Calu3 (cell line): ENCODE measurements at regions of chr18 and their contacts with region 1.

Region 1: DNA sequence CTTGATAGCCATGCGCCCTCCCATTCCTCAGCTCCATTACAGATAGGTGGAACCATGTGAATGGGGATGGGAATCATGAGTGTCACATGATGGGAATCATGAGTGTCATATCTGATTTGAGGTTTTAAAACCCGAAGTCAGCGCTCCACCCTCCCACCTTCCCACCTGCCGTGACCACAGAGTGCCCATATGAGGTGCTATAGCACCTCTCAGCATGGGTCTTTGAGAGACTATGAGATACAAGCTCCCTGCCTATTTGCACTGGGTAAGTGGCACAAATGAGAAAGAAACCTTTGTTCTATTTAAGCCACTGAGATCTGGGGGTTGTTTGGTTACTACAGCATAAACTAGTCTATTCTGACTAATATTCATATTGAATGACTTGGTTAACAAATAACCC is 78.5 kb upstream of the PTPRM start:
- DNase-seq: peak; percentile 62
- H3K4me3 Mint-ChIP-seq: peak overlapping the region; percentile 27
- H3K27ac Mint-ChIP-seq: peak overlapping the region; percentile 66
- H3K4me1 Mint-ChIP-seq: peaks cover 41% of the 10 kb centered on the region
- H3K27me3 Mint-ChIP-seq: no peaks in the 10 kb centered on the region
- CTCF ChIP-seq: peak; percentile 27

Region 2: DNA sequence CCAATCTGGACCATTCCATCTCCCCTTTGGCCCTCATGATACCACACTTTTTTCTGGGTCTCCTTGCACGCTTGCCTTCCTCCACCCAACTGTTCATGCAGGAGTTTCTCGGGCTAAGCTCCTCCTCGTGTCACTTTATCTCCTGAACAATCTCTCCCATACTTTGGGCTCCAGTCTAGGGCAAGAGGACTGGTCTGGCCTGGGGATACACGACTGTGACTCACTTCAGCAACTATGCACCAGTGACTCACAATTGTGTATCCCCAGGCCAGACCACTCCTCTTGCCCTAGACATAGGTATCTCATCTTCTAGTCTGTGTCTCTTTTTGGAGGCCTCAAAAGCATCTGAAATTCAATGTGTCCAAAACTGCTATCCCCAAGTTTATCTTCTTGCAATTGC is 70.8 kb before region 1 on chr18:
- CTCF ChIA-PET with region 1: no interaction called
- intact Hi-C with region 1: no loop called
- DNase-seq: peak; percentile 11
- H3K4me3 Mint-ChIP-seq: no peak overlapping the region
- H3K27ac Mint-ChIP-seq: no peak overlapping the region
- H3K4me1 Mint-ChIP-seq: peaks cover 18% of the 10 kb centered on the region
- H3K27me3 Mint-ChIP-seq: no peaks in the 10 kb centered on the region
- CTCF ChIP-seq: no peak

Region 3: GRCh38 chr18:7512348-7512747 is 23.8 kb after region 1 on chr18:
- CTCF ChIA-PET with region 1: interaction called, 5 read pairs
- intact Hi-C with region 1: loop called (anchors 2 kb)
- DNase-seq: peak; percentile 65
- H3K4me3 Mint-ChIP-seq: peak overlapping the region; percentile 36
- H3K27ac Mint-ChIP-seq: peak overlapping the region; percentile 17
- H3K4me1 Mint-ChIP-seq: peaks cover 19% of the 10 kb centered on the region
- H3K27me3 Mint-ChIP-seq: no peaks in the 10 kb centered on the region
- CTCF ChIP-seq: no peak

Region 4: DNA sequence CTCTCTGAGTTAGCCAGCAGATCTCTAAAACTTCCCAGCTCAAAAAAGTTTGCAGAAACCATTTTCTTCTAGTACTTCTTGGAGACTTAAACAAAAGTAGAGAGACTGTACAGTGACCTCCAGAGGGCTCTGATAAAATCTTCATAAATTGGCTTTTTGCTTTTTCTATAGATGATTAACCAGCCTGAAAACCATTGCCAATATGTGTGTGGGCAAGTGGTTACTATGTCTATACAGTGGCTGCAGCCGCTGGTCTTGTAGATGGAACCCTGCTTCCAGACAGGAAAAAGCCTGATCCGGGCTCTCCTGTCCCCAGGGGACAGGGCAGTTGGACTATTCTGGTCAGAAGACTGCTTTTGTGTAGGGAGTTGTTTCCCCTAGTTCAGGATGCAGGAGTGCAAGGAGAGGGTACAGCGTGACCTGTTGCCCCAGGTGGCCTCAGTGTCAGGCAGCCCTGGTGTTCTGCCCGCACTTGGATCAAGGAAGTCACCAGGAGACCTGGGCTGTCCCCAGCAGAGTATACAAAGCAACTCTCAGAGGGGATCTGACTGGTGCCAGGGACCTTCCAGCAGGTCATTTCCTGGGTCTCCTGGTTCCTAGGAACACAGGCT is 71.2 kb after region 1 on chr18:
- CTCF ChIA-PET with region 1: interaction called, 3 read pairs
- intact Hi-C with region 1: loop called (anchors 2 kb)
- DNase-seq: peak; percentile 13
- H3K4me3 Mint-ChIP-seq: no peak overlapping the region
- H3K27ac Mint-ChIP-seq: no peak overlapping the region
- H3K4me1 Mint-ChIP-seq: peaks cover 22% of the 10 kb centered on the region
- H3K27me3 Mint-ChIP-seq: no peaks in the 10 kb centered on the region
- CTCF ChIP-seq: no peak

Region 5: GRCh38 chr18:7566567-7567473 is 78.2 kb after region 1 on chr18 and contains the start of gene PTPRM:
- CTCF ChIA-PET with region 1: interaction called, 31 read pairs
- intact Hi-C with region 1: loop called (anchors 2 kb)
- DNase-seq: peak; percentile 86
- H3K4me3 Mint-ChIP-seq: peak within 1 kb of the TSS; percentile 78
- H3K27ac Mint-ChIP-seq: no peak within 1 kb of the TSS
- H3K4me1 Mint-ChIP-seq: peaks cover 36% of the 10 kb centered on the region
- H3K27me3 Mint-ChIP-seq: no peaks in the 10 kb centered on the region
- CTCF ChIP-seq: no peak
- total RNA-seq, gene PTPRM: 42.3 and 48.5 TPM in 2 replicates

Region 6: DNA sequence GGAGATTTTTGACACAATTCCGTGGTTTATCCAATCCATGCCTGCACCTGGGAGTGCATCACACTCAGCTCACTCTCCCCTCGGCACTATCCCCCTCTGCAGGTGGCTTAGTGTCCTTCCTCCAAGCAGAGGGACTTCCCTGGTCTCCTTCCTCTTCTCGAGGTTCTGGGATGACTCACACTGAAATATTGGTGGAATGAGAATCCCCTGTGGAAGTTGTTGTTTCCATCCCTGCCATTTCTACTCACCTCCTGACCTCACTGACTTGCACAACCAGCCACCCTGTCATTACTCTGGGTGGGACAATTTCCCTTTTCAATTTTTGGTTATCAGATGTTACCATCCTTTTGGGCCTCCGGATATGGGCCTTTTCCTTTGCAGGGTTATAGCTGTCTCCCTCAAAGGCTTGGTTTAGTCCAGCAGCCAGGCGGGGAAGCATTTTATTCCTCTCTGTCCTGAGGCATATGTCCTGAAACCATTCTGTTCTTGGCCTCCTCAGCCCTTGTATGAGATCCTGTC is 138.4 kb after region 1 on chr18:
- CTCF ChIA-PET with region 1: interaction called, 4 read pairs
- intact Hi-C with region 1: loop called (anchors 5 kb)
- DNase-seq: peak; percentile 72
- H3K4me3 Mint-ChIP-seq: peak overlapping the region; percentile 15
- H3K27ac Mint-ChIP-seq: peak overlapping the region; percentile 16
- H3K4me1 Mint-ChIP-seq: peaks cover 19% of the 10 kb centered on the region
- H3K27me3 Mint-ChIP-seq: no peaks in the 10 kb centered on the region
- CTCF ChIP-seq: peak; percentile 30

Region 7: DNA sequence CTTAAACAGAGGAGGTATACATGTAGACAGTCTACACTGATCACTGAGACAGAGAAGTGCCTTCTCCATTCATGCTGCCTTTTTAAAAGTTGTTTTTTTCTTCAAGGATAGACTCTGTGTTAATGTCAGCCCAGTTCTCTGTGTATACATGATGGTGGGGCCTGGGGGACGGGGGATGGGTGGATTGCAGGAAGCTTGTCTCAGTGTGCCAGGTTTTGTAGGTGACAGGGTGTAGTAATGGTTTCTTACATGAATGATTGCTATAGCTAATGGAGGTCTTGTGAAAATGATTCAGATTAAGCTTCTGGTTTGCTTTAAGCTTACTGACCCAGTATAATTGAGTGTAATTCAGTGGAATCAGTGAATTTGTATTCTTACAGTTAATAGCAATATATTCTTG is 502.1 kb after region 1 on chr18:
- CTCF ChIA-PET with region 1: no interaction called
- intact Hi-C with region 1: no loop called
- DNase-seq: no peak
- H3K4me3 Mint-ChIP-seq: no peak overlapping the region
- H3K27ac Mint-ChIP-seq: no peak overlapping the region
- H3K4me1 Mint-ChIP-seq: no peaks in the 10 kb centered on the region
- H3K27me3 Mint-ChIP-seq: no peaks in the 10 kb centered on the region
- CTCF ChIP-seq: no peak